Colonic mucosa (tissue), 4 donors: ENCODE measurements at regions of chr11 and their contacts with region 1.

Region 1: GRCh38 chr11:65988791-65989592 is 13.0 kb downstream of the EIF1AD start:
- DNase-seq: peak; percentile 95
- H3K4me3 ChIP-seq: no peak overlapping the region
- H3K27ac ChIP-seq: no peak overlapping the region
- H3K4me1 ChIP-seq: no peaks in the 10 kb centered on the region
- H3K27me3 ChIP-seq: no peaks in the 10 kb centered on the region
- CTCF ChIP-seq: peak; percentile 86

Region 2: DNA sequence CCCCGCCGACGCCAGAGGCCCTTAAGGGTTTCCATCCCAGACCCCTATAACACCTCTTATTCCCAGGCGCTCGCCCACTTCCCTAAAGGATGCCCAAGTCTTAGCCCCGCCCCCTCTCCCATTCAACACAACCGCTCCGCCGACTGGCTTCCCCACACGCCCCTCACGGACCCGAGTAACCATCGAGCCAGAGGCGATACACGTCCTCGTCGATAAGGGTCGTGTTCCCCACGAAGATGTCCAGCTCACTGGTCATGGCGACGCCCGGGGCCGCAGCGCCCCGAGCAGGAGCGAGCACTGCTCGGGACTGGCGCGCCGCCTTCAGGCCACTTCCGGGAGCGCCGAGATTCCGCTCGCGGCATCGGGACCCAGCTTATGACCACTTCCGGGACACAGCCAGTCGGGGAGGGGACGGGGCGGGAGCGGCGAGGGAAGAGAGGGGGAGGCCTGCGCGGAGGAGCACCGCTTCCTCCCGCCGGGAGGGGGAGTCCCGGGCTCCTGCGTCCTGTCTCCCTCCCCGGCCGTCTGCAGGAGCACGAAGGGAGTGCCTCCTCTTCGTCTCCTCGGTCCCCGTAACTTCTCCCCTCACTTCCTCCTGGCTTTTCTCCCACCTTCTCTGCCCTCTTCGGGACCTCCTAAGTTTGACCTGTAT is 100.7 kb before region 1 on chr11 and contains the start of gene FIBP:
- intact Hi-C with region 1: loop called (anchors 5 kb)
- DNase-seq: peak; percentile 99
- H3K4me3 ChIP-seq: peak within 1 kb of the TSS; percentile 76
- H3K27ac ChIP-seq: peak within 1 kb of the TSS; percentile 93
- H3K4me1 ChIP-seq: peaks cover 5% of the 10 kb centered on the region
- H3K27me3 ChIP-seq: no peaks in the 10 kb centered on the region
- CTCF ChIP-seq: peak; percentile 79
- total RNA-seq, gene FIBP: 41.9 to 53.5 TPM

Region 3: DNA sequence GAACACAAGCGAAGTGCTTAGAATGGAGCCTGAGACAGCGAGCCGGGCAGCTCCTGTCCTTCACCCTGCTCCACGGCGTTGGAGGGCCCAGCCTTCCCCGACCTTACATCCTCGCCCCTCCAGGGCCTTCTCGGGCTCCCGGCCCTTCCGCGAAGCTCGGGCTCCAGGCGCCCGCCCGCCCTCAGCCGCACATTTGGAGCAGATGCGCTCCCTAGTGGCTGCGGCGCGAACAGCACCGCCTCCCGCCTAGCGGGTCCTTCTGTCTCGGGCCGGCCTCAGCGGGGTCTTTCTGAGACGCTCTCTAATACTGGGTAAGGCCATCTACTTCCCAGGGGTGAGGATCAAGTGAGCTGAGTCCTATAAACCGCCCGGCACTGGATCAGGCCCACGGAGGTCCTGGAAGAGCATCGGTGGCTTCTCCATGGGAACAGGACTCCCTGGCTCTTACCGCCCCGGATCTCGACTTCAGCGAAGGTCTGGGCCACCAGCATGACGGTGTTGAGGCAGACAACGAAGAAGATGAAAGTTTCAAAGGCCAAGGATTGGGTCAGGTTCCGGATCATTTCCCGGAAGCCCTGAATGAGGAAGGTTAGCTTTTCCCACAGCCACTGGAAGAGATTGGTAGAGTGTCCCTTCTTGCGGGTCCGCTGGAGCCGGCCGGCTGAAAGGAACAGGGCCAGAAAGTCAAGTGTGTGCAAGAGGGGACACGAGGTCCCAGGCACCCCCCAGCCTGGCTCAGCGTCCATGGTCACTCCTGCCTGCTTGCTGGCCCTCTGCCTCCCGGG is 33.6 kb after region 1 on chr11:
- intact Hi-C with region 1: no loop called
- DNase-seq: peak; percentile 73
- H3K4me3 ChIP-seq: no peak overlapping the region
- H3K27ac ChIP-seq: no peak overlapping the region
- H3K4me1 ChIP-seq: no peaks in the 10 kb centered on the region
- H3K27me3 ChIP-seq: no peaks in the 10 kb centered on the region
- CTCF ChIP-seq: peak; percentile 96